Activated naive CD8-positive, alpha-beta T cell treated with anti-CD3 and anti-CD28 coated beads, Interleukin-2, amount 10 ng/mL, durations not matched to agents 7 days and 5 days (primary cell): ENCODE measurements at regions of chr16 and their contacts with region 1.

Region 1: GRCh38 chr16:2752035-2752849 is at the start of gene SRRM2:
- DNase-seq: peak; percentile 96
- ATAC-seq: peak; percentile 89
- H3K4me3 Mint-ChIP-seq: peak within 1 kb of the TSS; percentile 91
- H3K27ac Mint-ChIP-seq: peak within 1 kb of the TSS; percentile 97
- H3K4me1 Mint-ChIP-seq: peaks cover 56% of the 10 kb centered on the region
- H3K27me3 Mint-ChIP-seq: no peaks in the 10 kb centered on the region
- total RNA-seq, gene SRRM2: 740 to 773 TPM

Region 2: GRCh38 chr16:2739625-2740435 is 12.4 kb before region 1 on chr16:
- POLR2A ChIA-PET with region 1: interaction called, 12 read pairs
- DNase-seq: peak; percentile 63
- ATAC-seq: peak; percentile 97
- H3K4me3 Mint-ChIP-seq: peak overlapping the region; percentile 35
- H3K27ac Mint-ChIP-seq: peak overlapping the region; percentile 88
- H3K4me1 Mint-ChIP-seq: peaks cover 10% of the 10 kb centered on the region
- H3K27me3 Mint-ChIP-seq: peaks cover 3% of the 10 kb centered on the region

Region 3: DNA sequence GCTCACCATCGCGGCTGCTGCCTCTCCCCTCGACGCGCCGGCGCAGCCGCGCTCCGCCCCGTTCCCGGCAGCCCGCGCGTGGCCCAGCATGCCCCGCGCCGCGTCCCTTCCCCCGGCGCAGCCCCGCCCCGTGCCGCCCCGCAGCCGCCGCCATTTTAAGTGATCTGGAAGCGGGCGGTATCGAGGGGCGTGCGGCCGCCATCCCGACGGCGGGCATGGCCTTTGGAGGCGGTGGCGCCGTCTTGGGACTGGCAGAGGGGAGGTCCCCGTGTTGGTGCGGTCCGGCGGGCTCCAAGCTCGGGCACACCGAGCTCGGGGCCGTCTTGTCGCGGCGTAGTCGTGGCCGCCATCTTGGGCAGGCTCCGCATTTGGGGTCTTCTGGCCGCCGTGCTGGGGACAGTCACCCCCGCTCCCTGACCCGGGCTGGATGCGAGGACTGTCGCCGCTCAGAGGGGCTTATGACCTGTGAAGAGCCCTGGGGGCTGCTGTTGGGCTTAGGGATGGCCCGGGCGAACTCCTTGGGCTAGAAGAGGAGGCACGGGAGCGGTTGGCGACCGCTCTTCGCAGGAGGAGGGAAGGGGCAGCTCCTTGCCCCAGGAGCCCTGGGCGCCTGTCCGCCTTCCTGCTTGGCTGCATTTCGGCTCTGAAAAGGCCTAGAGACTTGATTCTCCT is 25.1 kb after region 1 on chr16 and contains the start of gene ELOB:
- POLR2A ChIA-PET with region 1: interaction called, 52 read pairs
- DNase-seq: peak; percentile 95
- ATAC-seq: peak; percentile 90
- H3K4me3 Mint-ChIP-seq: peak within 1 kb of the TSS; percentile 92
- H3K27ac Mint-ChIP-seq: peak within 1 kb of the TSS; percentile 95
- H3K4me1 Mint-ChIP-seq: peaks cover 16% of the 10 kb centered on the region
- H3K27me3 Mint-ChIP-seq: no peaks in the 10 kb centered on the region
- total RNA-seq, gene ELOB: 205 to 210 TPM